Mucosa of descending colon (tissue), 3 donors: ENCODE measurements at regions of chr1 and their contacts with region 1.

Region 1: DNA sequence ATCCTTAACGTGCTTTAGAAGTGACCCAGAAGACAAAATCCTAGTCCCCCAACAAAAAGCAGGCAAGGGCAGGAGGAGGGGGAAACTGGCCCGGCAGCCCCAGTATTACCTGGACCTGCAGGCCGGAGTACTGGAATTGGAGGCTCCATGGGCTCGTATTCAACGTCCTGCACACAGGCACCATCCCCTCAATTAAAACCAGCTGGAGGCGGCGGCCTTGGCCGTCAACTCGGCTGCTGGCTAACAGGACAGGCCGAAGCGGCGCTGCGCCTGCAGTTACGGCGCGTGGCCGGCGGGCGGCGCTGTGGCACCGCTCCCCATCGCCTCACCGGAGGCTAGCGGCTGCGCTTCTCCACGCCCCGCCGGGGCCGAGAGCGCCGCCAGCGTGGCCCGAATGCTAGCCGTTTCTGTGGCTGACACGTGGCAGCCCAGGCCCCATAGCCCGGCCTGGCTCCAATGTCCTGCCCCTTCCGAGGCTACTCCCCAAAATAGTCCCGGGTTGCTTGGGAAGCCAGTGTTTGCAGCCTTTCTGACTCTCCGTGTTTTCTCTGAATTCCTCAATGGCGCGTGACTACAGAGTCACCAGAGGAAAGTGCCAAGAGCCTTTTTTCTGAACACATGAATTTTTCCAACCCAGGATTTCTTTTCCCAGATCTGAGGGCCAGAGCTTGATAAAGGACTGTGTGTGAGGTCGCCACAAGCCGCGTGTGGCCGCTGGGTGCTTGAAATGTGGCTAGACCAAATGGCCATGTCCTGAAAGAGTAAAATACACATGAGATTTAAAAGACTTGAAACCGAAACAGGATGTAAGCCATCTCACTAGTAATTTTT is 82.5 kb downstream of the HHIPL2 start:
- DNase-seq: peak; percentile 90 to 94 (median 93)
- ATAC-seq: peak; percentile 100
- H3K4me3 ChIP-seq: no peak overlapping the region
- H3K4me1 ChIP-seq: peaks cover 11% of the 10 kb centered on the region
- CTCF ChIP-seq: peak; percentile 100

Region 2: DNA sequence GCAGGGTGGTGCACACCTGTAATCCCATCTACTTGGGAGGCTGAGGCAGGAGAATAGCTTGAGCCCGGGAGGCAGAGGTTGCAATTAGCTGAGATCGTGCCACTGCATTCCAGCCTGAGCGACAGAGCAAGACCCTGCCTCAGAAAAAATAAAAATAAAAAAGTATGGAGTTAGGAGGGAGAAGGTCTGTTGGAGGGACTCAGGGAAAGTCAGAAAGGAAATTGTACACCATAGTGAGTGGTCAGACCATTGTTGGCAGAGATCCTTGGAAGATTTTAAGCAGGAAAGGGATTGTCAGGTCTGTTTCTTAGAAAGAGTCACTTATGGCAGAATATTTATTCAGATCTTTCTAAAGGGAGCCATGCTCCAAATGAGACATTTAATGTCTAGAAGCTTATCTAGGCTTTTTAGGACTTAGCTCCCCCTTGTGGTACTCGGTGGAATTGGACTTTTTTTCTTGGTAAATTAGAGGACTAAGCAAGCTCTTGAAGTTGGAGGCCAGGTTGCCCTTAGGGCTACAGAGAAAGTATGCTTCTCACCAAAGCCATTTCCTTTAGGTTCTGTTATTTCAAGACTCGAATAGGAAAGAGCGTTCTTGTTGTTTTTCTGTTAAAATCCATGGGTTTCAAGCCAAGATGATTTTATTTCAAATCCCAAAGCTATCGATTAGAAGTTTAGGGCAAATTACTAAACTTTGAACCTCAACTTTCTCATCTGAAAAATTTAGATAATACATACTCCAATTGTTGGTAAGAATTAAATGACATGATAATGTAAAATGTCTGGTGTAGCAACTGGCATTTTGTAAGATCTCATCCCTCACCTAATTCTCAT is 169.0 kb after region 1 on chr1:
- intact Hi-C with region 1: loop called in 1 of 2 experiments (anchors 2 kb)
- DNase-seq: peak in 1 of 3 donors; percentile 97
- ATAC-seq: peak; percentile 88
- H3K4me3 ChIP-seq: no peak overlapping the region
- H3K4me1 ChIP-seq: no peaks in the 10 kb centered on the region
- CTCF ChIP-seq: peak; percentile 73